Activated T-helper 2 cell treated with anti-CD3 and anti-CD28 coated beads, Interferon-gamma antibody, Interleukin-2, Interleukin-4, amounts not matched to agents 10 μg/mL and 5 μg/mL and 100 μg/mL, durations not matched to agents 14 hours and 24 hours and 36 hours (primary cell): ENCODE measurements at regions of chr2 and their contacts with region 1.

Region 1: DNA sequence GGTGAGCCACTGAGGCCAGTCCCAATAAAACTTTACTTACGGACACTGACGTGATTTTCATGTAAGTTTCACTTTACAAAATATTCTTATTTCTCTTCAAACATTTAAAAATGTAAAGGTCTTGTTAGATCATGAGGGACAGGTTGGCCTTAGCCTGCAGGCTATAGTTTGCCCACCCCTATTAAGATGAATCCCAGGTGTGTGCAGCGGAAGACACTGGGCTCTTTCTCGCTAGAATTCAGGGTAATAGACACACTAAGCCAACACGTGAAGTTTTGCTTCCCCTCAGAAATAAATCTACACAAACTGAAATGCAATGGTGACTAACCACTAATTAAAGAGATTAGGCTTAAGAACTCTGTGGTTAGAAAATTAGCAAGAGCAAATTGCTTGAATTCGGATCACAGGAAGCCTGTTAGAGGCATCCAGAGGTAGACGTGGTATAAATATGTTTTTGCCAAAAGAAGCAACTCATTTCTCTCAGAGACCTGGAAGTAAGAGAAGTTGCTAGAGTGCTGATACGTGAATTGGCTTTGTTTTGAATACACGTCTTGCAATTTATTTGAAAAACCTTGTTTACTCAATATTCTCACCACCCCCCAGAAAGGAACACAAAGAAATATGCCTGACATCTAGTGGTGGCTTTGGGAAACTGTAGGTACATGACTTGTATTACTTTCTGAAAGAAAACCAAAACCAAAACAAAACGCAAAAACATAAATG is 151.6 kb downstream of the DTNB start:
- DNase-seq: peak; percentile 26
- H3K4me3 Mint-ChIP-seq: peak overlapping the region; percentile 17
- H3K27ac Mint-ChIP-seq: peak overlapping the region; percentile 50
- H3K4me1 Mint-ChIP-seq: peaks cover 20% of the 10 kb centered on the region
- H3K27me3 Mint-ChIP-seq: no peaks in the 10 kb centered on the region

Region 2: DNA sequence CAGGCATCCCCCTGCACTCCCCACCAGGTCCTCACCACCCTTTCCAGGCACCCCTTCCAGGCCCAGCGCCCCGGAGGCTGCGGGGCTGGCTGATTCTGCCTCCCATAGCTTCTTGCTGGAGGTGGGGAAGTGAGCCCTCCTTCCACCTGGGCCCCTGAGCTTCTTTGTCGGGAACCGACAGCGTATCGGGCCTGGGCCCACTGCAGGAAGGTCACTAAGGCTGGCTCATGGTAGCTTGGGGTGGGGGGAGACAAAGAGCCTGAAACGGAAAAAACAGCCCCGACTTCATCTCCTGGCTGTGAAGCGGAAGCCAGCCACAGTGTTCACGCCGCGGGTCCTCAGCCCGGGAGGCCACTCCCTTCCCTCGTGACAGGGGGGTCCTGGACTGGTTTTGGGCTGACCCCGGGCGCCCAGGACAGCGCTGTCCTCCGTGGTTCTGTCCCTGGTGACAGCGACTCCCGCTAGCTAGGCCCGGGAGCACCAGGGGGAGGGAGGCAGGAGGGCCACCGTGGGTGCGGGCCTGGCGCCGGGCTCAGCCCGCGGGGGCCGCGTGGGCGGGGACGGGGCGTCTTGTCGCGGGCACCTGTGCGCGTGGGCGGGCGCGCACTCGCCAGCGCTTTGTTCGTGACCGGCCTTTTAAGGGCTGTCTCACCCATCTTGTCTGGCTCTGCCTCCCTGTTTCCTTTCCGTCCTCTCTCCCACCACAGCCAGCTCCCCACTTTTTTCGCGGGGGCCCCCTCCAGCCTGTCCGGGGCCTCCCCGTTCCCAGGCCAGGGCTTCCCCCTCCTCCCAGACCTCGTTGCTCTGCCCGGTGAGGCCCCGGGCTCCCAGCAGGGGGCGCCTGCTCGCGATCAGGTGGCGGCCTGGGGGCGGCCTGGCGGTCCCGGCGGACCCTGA is 245.0 kb before region 1 on chr2:
- intact Hi-C with region 1: loop called (anchors 5 kb)
- DNase-seq: peak; percentile 70
- H3K4me3 Mint-ChIP-seq: peak overlapping the region; percentile 19
- H3K27ac Mint-ChIP-seq: peak overlapping the region; percentile 86
- H3K4me1 Mint-ChIP-seq: peaks cover 54% of the 10 kb centered on the region
- H3K27me3 Mint-ChIP-seq: no peaks in the 10 kb centered on the region

Region 3: DNA sequence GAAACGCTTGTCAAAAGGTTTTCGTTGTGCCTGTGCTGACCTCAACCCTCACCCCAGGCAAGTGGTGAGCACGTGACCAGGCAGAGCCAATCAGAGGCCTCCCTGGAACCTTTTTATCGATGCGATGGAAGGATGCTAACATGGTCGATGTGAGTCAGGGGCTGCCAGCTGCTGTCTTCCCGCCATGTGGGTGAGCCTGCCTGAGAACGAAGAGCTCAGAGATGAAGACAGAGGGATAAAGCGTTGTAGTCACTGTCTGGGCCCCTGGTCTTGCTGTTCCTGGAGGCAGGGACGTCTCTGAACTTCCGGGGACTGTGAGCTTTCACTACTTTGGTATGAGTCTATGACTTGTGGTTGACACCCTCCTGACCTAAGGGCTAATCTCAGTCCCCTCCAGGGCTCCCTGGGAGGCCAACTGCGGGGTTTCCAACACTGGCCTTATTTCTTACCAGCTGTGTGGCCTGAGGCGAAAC is 198.7 kb before region 1 on chr2:
- intact Hi-C with region 1: no loop called
- DNase-seq: no peak
- H3K4me3 Mint-ChIP-seq: peak overlapping the region; percentile 72
- H3K27ac Mint-ChIP-seq: peak overlapping the region; percentile 96
- H3K4me1 Mint-ChIP-seq: peaks cover 45% of the 10 kb centered on the region
- H3K27me3 Mint-ChIP-seq: no peaks in the 10 kb centered on the region

Region 4: DNA sequence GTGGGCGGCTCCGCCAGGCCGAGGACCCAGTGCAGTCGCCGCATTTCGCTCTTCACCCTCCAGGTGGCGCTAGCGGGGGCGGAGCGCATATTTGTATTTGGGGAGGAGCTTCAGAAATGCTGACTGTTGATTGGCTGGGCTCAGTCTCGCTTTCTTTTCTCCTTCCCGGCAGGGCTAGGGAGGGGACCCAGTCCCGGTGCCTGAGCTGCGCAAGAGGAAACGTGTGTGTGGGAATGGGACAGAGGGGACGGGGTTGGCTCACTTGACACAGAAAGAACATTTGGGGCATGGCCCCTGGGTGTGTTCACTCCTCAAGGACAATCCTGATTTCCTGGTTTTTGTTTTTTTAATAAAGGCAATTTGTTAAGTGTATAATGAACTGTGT is 159.8 kb before region 1 on chr2:
- intact Hi-C with region 1: loop called (anchors 1 kb)
- DNase-seq: peak; percentile 93
- H3K4me3 Mint-ChIP-seq: peak overlapping the region; percentile 81
- H3K27ac Mint-ChIP-seq: peak overlapping the region; percentile 92
- H3K4me1 Mint-ChIP-seq: peaks cover 8% of the 10 kb centered on the region
- H3K27me3 Mint-ChIP-seq: no peaks in the 10 kb centered on the region

Region 5: DNA sequence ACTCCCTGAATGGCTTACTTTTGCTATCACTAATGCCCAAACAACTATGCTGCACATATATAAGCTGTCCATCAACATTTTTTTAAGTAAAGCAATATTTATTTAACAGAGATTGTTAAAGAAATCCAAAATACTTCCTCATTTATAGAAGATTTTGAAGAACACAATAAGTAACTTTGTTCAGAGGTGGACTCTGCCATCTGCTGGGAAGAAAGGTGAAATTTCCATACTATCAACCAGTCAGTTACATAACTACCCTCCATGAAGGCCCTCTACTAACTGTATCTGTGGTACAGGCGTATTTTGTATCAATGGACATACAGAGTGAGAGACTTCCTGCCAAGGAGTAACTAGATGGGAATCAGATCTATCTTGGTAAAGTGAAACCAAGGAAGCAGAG is 45.6 kb after region 1 on chr2:
- intact Hi-C with region 1: loop called (anchors 2 kb)
- DNase-seq: no peak
- H3K4me3 Mint-ChIP-seq: no peak overlapping the region
- H3K27ac Mint-ChIP-seq: no peak overlapping the region
- H3K4me1 Mint-ChIP-seq: peaks cover 14% of the 10 kb centered on the region
- H3K27me3 Mint-ChIP-seq: no peaks in the 10 kb centered on the region